Activated naive CD4-positive, alpha-beta T cell treated with anti-CD3 and anti-CD28 coated beads, Interleukin-2, amount 10 ng/mL, durations not matched to agents 7 days and 5 days (primary cell): ENCODE measurements at regions of chr12 and their contacts with region 1.

Region 1: GRCh38 chr12:89470741-89471509 is 53.7 kb downstream of the GALNT4 start:
- DNase-seq: no peak
- H3K4me3 Mint-ChIP-seq: no peak overlapping the region
- H3K27ac Mint-ChIP-seq: peak overlapping the region; percentile 50
- H3K4me1 Mint-ChIP-seq: peaks cover 79% of the 10 kb centered on the region
- H3K27me3 Mint-ChIP-seq: no peaks in the 10 kb centered on the region

Region 2: GRCh38 chr12:89417246-89417977 is 53.5 kb before region 1 on chr12:
- CTCF ChIA-PET with region 1: no interaction called
- DNase-seq: no peak
- H3K4me3 Mint-ChIP-seq: no peak overlapping the region
- H3K27ac Mint-ChIP-seq: no peak overlapping the region
- H3K4me1 Mint-ChIP-seq: peaks cover 5% of the 10 kb centered on the region
- H3K27me3 Mint-ChIP-seq: no peaks in the 10 kb centered on the region

Region 3: DNA sequence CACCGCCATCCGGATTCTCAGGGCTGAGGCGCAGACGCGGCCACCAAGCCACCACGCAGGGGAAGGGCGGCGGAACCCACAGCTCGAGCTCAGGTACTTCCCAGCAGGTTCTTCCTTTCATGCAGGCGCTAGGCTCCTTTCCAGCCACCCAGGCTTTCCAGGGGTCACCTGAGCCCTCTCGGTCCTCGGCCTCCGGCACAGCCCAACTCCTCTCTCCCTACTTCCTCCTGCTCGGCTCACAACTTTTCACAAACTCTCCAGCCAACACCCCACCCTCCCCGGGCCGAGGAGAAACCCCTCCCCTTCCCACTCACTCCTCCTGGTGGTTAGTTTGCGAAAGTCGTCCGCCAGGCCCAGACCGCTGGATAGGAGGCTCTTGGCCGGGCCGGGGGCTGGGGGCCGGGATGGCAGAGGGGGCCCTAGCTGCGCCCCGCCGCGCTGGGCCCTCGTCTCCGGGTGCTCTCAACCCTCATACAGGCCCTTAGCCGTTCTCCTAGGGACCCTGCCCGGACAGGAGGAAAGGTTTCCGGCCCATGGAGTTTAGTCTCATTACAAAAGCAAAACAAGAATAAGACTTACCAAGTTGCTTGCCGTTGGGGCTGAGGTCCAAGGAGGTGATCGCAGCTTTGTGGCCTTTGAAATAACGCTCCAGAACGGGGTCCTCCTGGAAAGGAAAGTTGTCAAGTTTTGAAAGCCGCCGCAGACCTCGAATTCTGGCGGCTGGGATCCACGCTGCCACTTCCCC is 53.8 kb after region 1 on chr12 and contains the start of gene GALNT4:
- CTCF ChIA-PET with region 1: interaction called, 125 read pairs
- DNase-seq: peak; percentile 86
- H3K4me3 Mint-ChIP-seq: peak within 1 kb of the TSS; percentile 95
- H3K27ac Mint-ChIP-seq: peak within 1 kb of the TSS; percentile 92
- H3K4me1 Mint-ChIP-seq: peaks cover 68% of the 10 kb centered on the region
- H3K27me3 Mint-ChIP-seq: no peaks in the 10 kb centered on the region